ENCODE measurements at regions of chr19 and their contacts with region 1.

Region 1: GRCh38 chr19:17001603-17002183 is 24.9 kb downstream of the CPAMD8 start:
- DNase-seq: peak in 33 of 35 experiments; percentile 43 to 95 (median 86)
- ATAC-seq: peak; percentile 94 to 97 (median 97)
- H3K4me3 ChIP-seq: peak overlapping the region; percentile 15 to 21
- H3K4me3 Mint-ChIP-seq: peak overlapping the region in 2 of 3 donors; percentile 55 to 78
- H3K27ac ChIP-seq: peak overlapping the region; percentile 80
- H3K27ac Mint-ChIP-seq: peak overlapping the region; percentile 61 to 87
- H3K4me1 ChIP-seq: peaks cover 13 to 31% of the 10 kb centered on the region in 2 experiments
- H3K4me1 Mint-ChIP-seq: peaks cover 16 to 34% (median 33%) of the 10 kb centered on the region in 3 donors
- H3K27me3 ChIP-seq: peaks cover 0 to 5% of the 10 kb centered on the region in 2 experiments
- H3K27me3 Mint-ChIP-seq: no peaks in the 10 kb centered on the region

Region 2: DNA sequence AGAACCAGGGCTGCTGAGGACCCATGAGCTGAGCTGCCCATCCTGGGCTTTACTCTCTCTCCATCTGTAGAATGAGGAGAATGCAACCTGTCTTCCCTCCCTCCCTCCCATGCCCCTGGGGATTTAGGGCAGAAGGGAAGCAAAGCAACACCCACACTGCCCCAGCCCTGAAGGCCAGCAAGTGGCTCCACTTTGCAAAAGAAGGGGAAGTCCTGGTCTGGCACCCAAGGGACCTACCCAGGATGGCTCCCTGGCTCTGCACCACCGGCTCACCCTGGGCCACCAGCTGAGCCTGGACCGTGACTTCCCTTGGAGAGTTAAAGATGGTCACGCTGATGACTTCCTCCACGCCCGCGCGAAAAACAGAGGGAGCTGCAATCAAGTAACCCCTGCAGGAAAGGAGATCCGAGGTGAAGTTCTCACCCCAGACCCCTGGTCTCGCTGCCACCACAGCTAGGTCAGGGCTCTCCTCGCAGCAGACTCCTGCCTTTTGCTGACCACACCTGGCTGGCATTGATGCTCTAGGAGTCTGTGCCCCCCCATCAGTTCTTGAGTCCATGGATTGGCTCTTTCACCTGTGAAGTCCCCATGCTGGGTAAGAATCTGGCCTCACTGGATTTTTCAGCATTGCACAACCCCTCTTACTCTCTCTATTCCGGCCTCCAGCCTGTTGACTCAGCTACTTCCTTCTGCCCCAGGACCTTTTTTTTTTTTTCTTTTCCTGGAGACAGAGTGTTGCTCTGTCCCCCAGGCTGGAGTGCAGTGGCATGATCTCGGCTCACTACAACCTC is 20.3 kb after region 1 on chr19:
- CTCF ChIA-PET with region 1: interaction called in 1 of 2 experiments, 17 read pairs
- POLR2A ChIA-PET with region 1: no interaction called
- DNase-seq: no peak
- ATAC-seq: no peak
- H3K4me3 ChIP-seq: no peak overlapping the region
- H3K4me3 Mint-ChIP-seq: no peak overlapping the region
- H3K27ac ChIP-seq: no peak overlapping the region
- H3K27ac Mint-ChIP-seq: no peak overlapping the region
- H3K4me1 ChIP-seq: peaks cover 0 to 9% of the 10 kb centered on the region in 2 experiments
- H3K4me1 Mint-ChIP-seq: peaks cover 6 to 9% (median 7%) of the 10 kb centered on the region in 3 donors
- H3K27me3 ChIP-seq: peaks cover 0 to 39% of the 10 kb centered on the region in 2 experiments
- H3K27me3 Mint-ChIP-seq: peaks cover 20 to 35% of the 10 kb centered on the region in 2 donors